A549 (cell line): ENCODE measurements at regions of chr6 and their contacts with region 1.

Region 1: DNA sequence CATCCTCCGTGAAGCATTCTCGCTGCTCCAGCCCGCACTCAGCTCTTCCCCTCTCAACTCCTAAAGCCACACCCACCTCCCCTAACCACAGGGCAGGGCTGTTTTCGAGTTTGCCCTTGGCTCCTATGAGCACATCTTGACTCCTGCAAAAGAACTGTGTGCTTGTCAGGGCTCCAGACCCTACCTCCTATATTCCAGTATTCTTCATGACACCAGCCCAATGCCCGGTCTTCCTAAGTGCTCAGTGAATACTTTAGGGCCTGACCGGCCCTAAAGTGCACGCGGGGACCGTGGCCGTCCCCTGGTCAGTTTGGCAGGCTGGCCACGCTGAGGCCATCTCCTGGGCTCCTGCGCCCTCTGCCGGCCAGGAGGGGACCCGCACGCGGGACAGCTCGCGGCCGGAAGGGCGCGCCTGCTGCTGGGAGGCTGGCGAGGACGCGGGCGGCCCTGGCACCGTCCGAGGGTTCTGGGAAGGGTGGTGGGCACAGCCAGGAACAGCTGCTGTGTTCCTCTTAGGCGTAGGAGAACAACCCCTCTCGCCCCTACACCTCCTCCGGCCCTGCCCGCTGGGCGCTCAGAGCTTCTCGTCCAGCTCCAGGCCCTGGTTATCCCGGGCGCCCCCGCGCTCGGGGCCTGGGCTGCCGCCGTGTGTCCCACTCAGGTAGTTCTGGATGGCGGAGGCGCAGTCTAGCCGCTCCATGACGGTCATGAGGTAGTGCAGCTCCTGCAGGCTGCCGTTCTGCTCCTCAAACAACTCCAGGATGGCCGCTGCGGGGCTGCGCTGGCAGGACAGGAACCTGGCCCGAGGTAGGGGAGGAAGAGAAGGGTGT is 11.0 kb downstream of the UNC5CL start:
- DNase-seq: peak; percentile 54 to 59
- ATAC-seq: peak; percentile 95 to 98
- H3K4me3 ChIP-seq: peak overlapping the region; percentile 17; the same call in 1 of the 3 replicates
- H3K27ac ChIP-seq: peak overlapping the region; percentile 67 to 85
- H3K4me1 ChIP-seq: peaks cover 15% of the 10 kb centered on the region; the same call in 2 of the 3 replicates
- CTCF ChIP-seq: peak; percentile 92
- EP300 ChIP-seq: no peak
- POLR2A ChIP-seq: no peak
- RAD21 ChIP-seq: peak; percentile 89 to 95

Region 2: DNA sequence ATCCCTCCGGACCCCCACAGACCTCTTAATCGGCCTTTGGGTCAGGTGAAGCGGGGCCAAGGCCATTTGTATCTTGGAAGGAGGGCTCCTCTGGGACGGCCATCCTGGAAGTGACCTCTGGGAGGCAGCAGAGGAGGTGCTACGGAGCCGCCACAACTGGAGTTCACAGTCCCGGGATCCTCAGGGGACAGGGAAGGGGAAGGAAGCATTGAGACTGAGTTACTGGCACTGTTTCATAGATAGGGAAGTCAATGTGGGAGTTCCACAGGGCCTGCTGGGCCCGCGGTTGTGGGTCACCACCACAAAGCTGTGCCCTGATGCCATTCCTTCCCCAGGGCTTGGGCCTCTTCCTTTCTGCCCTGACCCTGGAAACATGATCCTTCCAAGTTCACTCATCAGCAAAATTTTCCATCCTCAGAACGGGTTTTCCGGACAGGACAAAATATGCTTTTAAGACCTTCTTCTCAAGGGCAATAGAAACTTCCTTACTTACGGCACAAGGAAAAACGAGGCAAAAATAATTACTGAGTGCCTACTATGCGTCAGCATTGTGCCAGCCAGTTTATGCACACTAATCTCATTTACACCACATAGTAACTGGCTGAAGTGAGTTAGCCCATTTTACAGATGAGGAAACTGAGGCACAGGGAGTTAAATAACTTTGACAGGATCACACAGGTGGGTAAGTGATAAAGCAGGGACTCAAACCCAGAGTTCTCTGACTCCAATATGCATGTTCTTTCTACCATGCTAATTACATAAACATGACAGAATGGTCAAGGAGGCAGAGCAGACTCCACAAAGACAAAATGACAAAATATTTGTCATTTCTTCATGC is 132.8 kb before region 1 on chr6:
- CTCF ChIA-PET with region 1: interaction called, 71 read pairs
- POLR2A ChIA-PET with region 1: no interaction called
- DNase-seq: peak; percentile 50 to 76
- ATAC-seq: peak; percentile 98 to 99
- H3K4me3 ChIP-seq: no peak overlapping the region
- H3K27ac ChIP-seq: peak overlapping the region; percentile 80 to 83
- H3K4me1 ChIP-seq: peaks cover 8% of the 10 kb centered on the region
- CTCF ChIP-seq: peak; percentile 64
- EP300 ChIP-seq: no peak
- POLR2A ChIP-seq: no peak
- RAD21 ChIP-seq: peak; percentile 89 to 91

Region 3: GRCh38 chr6:40900791-40901190 is 127.2 kb before region 1 on chr6:
- CTCF ChIA-PET with region 1: interaction called, 71 read pairs
- POLR2A ChIA-PET with region 1: no interaction called
- DNase-seq: no peak
- ATAC-seq: no peak
- H3K4me3 ChIP-seq: no peak overlapping the region
- H3K27ac ChIP-seq: peak overlapping the region in 1 of 2 experiments; percentile 43; a peak in 2 of 6 replicates
- H3K4me1 ChIP-seq: peaks cover under 1% of the 10 kb centered on the region; the same call in 1 of the 3 replicates
- CTCF ChIP-seq: no peak
- EP300 ChIP-seq: no peak
- POLR2A ChIP-seq: no peak
- RAD21 ChIP-seq: no peak

Region 4: GRCh38 chr6:40912158-40912946 is 115.7 kb before region 1 on chr6:
- CTCF ChIA-PET with region 1: interaction called, 12 read pairs
- POLR2A ChIA-PET with region 1: no interaction called
- DNase-seq: peak; percentile 26 to 73
- ATAC-seq: peak; percentile 90 to 93
- H3K4me3 ChIP-seq: no peak overlapping the region
- H3K27ac ChIP-seq: peak overlapping the region; percentile 67 to 74
- H3K4me1 ChIP-seq: peaks cover 30% of the 10 kb centered on the region
- CTCF ChIP-seq: peak; percentile 57
- EP300 ChIP-seq: no peak
- POLR2A ChIP-seq: no peak
- RAD21 ChIP-seq: peak; percentile 67 to 78

Region 5: DNA sequence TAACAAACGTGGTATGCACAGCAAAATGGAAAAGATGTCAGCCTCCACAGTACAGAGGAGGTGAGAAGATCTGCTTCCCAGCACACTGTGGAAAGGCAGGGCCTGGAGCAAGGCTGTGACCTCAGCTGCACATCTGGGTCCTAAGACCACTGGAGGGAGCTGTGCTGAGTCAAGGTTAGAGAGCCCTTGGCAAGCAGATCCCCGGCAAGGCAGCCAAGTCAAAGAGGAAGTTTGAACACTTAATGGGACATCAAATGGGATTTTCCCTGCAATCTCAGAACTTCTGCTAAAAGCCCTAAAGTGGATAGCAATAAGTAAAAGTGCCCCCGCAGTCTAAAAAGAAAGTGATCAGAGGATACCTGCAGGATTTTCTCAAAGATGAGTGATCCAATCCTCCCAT is 28.4 kb before region 1 on chr6:
- CTCF ChIA-PET with region 1: interaction called, 14 read pairs
- POLR2A ChIA-PET with region 1: no interaction called
- DNase-seq: peak; percentile 53 to 81
- ATAC-seq: peak; percentile 60 to 80; a peak in 5 of 6 replicates
- H3K4me3 ChIP-seq: no peak overlapping the region
- H3K27ac ChIP-seq: peak overlapping the region; percentile 96 to 97
- H3K4me1 ChIP-seq: peaks cover 48% of the 10 kb centered on the region
- CTCF ChIP-seq: peak; percentile 41
- EP300 ChIP-seq: no peak
- POLR2A ChIP-seq: no peak
- RAD21 ChIP-seq: peak in 1 of 2 experiments; percentile 39; a peak in 2 of 5 replicates

Region 6: DNA sequence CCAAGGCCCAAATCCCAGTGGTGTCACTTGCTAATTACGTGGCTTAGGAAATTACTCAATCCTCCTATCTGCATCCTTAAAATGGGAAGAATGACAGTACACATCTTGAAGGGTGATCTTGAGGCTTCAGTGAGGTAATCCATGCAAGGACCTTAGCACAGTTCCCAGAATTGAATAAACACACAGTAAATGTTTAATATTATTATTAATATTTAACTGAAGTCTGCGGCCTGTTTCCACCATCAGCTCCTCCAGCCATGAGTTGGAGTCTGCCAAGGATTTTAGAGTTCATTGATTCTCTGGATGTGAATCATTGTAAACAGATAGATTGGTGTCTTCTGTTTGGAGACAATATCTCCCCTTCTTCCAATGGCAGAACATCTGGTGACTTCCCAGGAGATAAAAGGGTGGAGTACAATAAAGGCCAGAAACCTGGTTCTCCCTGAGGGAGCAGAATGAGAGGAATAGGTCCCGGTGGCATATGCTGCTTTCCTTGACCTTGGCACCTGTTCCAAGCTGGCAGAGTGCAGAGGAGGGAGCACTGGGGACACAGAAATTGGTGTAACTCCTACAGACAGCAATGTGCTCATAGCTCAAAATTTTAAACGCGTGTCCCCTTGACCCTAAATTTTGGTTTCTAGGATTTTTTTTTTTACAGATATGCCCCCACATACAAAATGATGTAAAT is 14.4 kb before region 1 on chr6:
- CTCF ChIA-PET with region 1: interaction called, 21 read pairs
- POLR2A ChIA-PET with region 1: no interaction called
- DNase-seq: peak; percentile 25 to 80
- ATAC-seq: peak; percentile 66 to 88; a peak in 5 of 6 replicates
- H3K4me3 ChIP-seq: no peak overlapping the region
- H3K27ac ChIP-seq: peak overlapping the region; percentile 84 to 92
- H3K4me1 ChIP-seq: peaks cover 37% of the 10 kb centered on the region
- CTCF ChIP-seq: no peak
- EP300 ChIP-seq: peak; percentile 31 to 65; a peak in 3 of 5 replicates
- POLR2A ChIP-seq: no peak
- RAD21 ChIP-seq: 0 out of 5 replicates have a peak, but pooled peaks of 1 of the 2 experiments have one; percentile 17

Region 7: DNA sequence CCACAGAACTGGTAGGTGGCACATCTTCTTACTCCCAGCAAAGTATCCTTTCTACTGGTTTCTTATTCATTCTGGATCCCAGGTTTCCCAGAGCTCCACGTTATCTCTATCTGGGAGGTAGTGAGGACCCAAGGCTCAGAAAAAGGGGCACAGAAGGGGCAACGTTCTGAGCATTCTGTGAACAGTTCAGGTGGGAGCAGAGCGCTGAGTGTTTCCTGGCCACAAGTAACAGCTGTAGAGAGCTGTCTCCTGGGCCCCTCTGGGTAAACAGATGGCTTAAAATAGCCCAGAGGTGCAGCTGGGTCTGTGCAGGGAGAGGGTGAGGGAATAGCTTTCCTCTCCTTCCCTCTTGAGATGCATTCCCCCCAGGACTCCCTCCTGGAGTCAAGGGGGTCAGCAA is 27.1 kb after region 1 on chr6:
- CTCF ChIA-PET with region 1: interaction called, 10 read pairs
- POLR2A ChIA-PET with region 1: no interaction called
- DNase-seq: no peak
- ATAC-seq: no peak
- H3K4me3 ChIP-seq: no peak overlapping the region
- H3K27ac ChIP-seq: no peak overlapping the region
- H3K4me1 ChIP-seq: peaks cover 12% of the 10 kb centered on the region; the same call in 2 of the 3 replicates
- CTCF ChIP-seq: no peak
- EP300 ChIP-seq: no peak
- POLR2A ChIP-seq: no peak
- RAD21 ChIP-seq: no peak

Region 8: GRCh38 chr6:41080621-41081020 is 52.6 kb after region 1 on chr6:
- CTCF ChIA-PET with region 1: no interaction called
- POLR2A ChIA-PET with region 1: no interaction called
- DNase-seq: no peak
- ATAC-seq: no peak
- H3K4me3 ChIP-seq: no peak overlapping the region
- H3K27ac ChIP-seq: no peak overlapping the region
- H3K4me1 ChIP-seq: peaks cover 3% of the 10 kb centered on the region; the same call in 2 of the 3 replicates
- CTCF ChIP-seq: no peak
- EP300 ChIP-seq: no peak
- POLR2A ChIP-seq: no peak
- RAD21 ChIP-seq: no peak